ENCODE measurements at regions of chr5 and their contacts with region 1.

Region 1: DNA sequence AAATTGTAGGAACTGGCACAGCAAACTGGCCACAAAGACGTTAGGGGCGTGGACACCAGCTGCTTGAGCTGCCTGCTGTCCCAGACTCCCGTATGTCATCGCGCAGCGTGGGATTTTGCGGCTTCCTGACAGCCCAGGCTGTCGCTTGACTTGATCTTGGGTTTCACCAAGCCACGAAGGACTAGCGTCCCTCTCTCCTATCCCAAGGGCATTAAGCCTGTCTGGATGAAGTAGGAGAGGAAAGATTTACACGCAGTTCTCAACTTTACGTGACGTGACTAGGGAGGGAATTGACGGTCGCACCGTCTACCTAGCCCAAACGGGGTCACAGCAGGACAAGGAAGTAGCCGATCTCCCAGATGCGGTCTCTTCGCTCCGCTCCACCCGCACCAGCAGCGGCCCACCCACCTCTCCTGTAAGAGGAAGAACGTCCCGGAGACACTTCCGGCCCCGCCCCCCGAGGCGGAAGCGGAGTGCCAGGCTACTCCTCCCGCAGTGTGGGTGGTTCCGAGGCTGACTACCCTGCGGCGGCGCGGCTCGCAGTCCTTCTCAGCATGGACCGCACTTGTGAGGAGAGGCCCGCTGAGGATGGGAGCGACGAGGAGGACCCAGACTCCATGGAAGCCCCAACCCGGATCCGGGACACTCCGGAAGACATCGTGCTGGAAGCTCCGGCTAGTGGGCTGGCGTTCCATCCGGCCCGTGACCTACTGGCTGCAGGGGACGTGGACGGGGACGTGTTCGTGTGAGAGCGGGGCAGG is at the start of gene WDR55:
- DNase-seq: peak; percentile 92 to 95
- H3K4me3 ChIP-seq: peak within 1 kb of the TSS; percentile 86 to 89 (median 87)
- H3K27ac ChIP-seq: peak within 1 kb of the TSS; percentile 92 to 93
- H3K4me1 ChIP-seq: peaks cover 0 to 9% of the 10 kb centered on the region in 2 donors
- H3K27me3 ChIP-seq: no peaks in the 10 kb centered on the region
- CTCF ChIP-seq: no peak
- POLR2A ChIP-seq: no peak
- total RNA-seq, gene WDR55: 20.0 to 25.6 (median 25.3) TPM

Region 2: DNA sequence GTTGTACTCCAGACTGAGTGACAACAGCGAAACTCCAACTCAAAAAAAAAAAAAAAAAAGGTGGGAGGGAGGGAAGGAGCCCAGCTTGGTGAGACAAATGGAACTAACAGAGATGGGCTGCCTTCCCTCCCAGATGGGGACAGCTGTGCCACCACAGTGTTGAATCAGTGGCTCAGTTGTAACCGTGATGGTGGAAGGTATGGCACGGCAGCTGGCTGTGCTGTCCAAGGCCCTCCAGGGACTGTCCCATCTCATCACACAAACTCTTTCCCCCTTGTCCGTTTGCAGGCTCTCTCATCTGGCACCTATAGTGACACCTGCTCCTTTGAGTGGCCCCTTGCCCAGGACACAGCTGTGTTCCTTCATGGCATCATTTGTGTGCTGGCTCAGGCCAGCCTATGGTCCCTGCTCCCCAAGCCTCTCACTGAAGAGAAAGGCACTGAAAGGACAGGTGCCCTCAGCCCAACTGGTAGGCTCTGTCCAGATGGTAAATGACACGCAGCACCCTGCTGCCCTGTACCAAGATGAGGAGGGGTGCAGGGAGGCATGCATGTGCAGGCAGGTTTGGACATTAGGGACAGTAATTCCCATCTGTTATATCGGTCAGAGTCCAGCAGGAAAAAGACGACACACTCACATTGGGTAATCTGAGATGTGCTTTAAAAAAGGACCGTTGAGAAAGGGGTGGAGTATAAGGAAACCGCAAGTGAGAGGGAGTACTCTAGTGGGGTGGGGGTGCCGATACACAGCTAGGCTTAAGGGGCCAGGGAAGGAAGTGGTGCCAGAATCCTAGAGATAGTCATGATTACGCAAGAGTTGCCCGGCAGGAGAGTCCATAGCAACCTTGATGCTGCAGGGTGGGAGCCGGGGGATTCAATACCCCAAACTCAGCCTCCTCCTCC is 1189.4 kb before region 1 on chr5:
- intact Hi-C with region 1: no loop called
- DNase-seq: no peak
- H3K4me3 ChIP-seq: no peak overlapping the region
- H3K27ac ChIP-seq: peak overlapping the region in 1 of 2 donors; percentile 52
- H3K4me1 ChIP-seq: peaks cover 0 to 3% of the 10 kb centered on the region in 2 donors
- H3K27me3 ChIP-seq: no peaks in the 10 kb centered on the region
- CTCF ChIP-seq: no peak
- POLR2A ChIP-seq: no peak

Region 3: GRCh38 chr5:140677947-140678346 is 13.4 kb after region 1 on chr5:
- intact Hi-C with region 1: loop called (anchors 1 kb)
- DNase-seq: no peak
- H3K4me3 ChIP-seq: no peak overlapping the region
- H3K27ac ChIP-seq: no peak overlapping the region
- H3K4me1 ChIP-seq: no peaks in the 10 kb centered on the region
- H3K27me3 ChIP-seq: no peaks in the 10 kb centered on the region
- CTCF ChIP-seq: no peak
- POLR2A ChIP-seq: no peak

Region 4: GRCh38 chr5:141508798-141509611 is 844.5 kb after region 1 on chr5:
- intact Hi-C with region 1: no loop called
- DNase-seq: peak in 1 of 2 donors; percentile 49
- H3K4me3 ChIP-seq: peak overlapping the region; percentile 39 to 63 (median 41)
- H3K27ac ChIP-seq: peak overlapping the region; percentile 87 to 96
- H3K4me1 ChIP-seq: peaks cover 5 to 15% of the 10 kb centered on the region in 2 donors
- H3K27me3 ChIP-seq: no peaks in the 10 kb centered on the region
- CTCF ChIP-seq: no peak
- POLR2A ChIP-seq: peak; percentile 17